ENCODE measurements at regions of chr2 and their contacts with region 1.

Region 1: DNA sequence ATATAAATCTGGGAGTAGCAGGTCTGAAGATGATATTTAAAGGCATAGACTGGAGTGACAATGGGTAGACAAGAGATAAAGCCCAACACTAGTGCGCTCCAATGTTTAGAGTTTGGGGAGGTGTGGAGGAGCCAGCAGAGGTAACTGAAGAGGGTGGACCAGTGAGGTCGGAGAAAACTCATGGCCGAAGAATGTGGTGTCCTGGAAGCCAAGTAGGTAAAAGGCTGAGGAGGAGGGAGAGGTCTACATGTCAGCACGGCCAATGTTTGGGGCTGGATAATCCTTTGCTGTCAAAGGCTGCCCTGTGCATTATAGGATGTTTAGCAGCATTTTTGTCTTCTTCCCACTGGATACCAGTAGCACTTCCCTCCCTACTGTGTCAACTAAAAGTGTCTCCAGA is 78.8 kb upstream of the KCNE4 start:
- DNase-seq: no peak
- H3K4me3 ChIP-seq: no peak overlapping the region
- H3K27ac ChIP-seq: no peak overlapping the region
- H3K4me1 ChIP-seq: peaks cover 6% of the 10 kb centered on the region
- H3K27me3 ChIP-seq: no peaks in the 10 kb centered on the region
- CTCF ChIP-seq: no peak

Region 2: DNA sequence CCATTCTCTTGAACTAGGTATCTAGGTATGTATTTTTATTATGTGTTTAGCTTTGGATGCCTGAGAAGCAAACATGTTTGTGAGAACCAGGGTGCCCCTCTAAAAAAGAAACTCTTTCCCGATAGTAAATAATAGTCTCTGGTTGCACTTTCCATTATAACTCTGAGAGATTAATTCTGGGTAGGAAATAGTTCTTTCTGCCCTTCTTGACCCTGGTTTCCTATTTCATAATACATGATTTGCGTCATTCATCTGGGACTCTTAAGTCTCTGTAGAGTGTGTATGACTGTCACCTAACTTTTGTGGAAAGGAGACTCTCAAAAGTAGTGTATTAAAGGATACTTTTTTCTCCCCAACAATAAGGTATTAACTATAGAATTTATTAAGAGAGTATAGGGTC is 80.9 kb before region 1 on chr2:
- intact Hi-C with region 1: no loop called
- DNase-seq: no peak
- H3K4me3 ChIP-seq: peak overlapping the region; percentile 7
- H3K27ac ChIP-seq: peak overlapping the region; percentile 70
- H3K4me1 ChIP-seq: peaks cover 63% of the 10 kb centered on the region
- H3K27me3 ChIP-seq: no peaks in the 10 kb centered on the region
- CTCF ChIP-seq: no peak

Region 3: DNA sequence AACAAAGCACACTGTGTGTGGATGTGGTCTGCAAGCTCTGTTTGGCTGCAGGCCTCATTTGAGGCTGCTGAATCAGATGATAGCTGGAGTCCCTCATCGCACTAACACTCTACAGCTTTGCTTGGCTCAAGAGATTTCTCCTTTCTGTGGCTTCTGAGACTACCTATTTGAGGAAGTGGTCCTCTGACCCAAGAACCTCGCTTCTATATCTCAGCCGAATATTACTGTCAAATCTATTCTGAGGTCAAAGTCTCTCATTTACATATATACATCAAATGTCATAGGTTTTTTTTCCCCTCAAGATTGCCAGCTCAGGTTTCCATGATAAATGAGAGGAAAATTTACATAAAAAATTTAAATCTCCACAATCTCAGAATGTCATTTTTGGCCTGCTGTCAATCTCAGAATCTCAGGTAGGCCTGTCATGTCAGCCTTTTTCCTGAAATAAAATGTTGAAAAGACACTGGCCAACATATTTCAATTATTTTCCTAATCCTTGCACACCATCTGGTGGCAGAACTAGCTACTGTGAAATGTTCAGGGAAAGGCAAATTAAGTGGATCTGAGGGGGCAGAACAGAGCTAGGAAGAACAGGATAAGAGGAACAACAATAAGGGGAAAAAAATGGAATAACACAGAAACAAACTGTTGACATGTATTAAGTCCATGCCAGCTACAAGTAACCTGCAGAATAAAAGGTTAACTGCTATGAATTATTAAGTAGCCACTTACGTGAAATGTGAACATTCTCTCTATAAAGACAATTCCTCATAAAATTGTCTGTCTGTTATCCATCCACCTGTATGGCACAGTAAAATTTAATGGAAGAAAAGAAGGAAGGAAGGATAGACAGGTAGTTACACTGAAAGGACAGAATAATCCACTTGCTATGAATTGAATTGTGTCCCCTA is 824.8 kb after region 1 on chr2:
- intact Hi-C with region 1: loop called (anchors 5 kb)
- DNase-seq: no peak
- H3K4me3 ChIP-seq: no peak overlapping the region
- H3K27ac ChIP-seq: no peak overlapping the region
- H3K4me1 ChIP-seq: no peaks in the 10 kb centered on the region
- H3K27me3 ChIP-seq: no peaks in the 10 kb centered on the region
- CTCF ChIP-seq: peak; percentile 75

Measured in left ventricle myocardium inferior (tissue), 1 donor.